B cell (primary cell): ENCODE measurements at regions of chr7 and their contacts with region 1.

Region 1: GRCh38 chr7:127708788-127709187 is 56.8 kb downstream of the SND1 start:
- DNase-seq: peak; percentile 82
- ATAC-seq: peak; percentile 66
- H3K4me3 ChIP-seq: no peak overlapping the region
- H3K4me3 Mint-ChIP-seq: no peak overlapping the region
- H3K27ac ChIP-seq: no peak overlapping the region
- H3K27ac Mint-ChIP-seq: no peak overlapping the region
- H3K4me1 ChIP-seq: no peaks in the 10 kb centered on the region
- H3K4me1 Mint-ChIP-seq: no peaks in the 10 kb centered on the region
- H3K27me3 ChIP-seq: no peaks in the 10 kb centered on the region
- H3K27me3 Mint-ChIP-seq: no peaks in the 10 kb centered on the region
- CTCF ChIP-seq: peak; percentile 89

Region 2: DNA sequence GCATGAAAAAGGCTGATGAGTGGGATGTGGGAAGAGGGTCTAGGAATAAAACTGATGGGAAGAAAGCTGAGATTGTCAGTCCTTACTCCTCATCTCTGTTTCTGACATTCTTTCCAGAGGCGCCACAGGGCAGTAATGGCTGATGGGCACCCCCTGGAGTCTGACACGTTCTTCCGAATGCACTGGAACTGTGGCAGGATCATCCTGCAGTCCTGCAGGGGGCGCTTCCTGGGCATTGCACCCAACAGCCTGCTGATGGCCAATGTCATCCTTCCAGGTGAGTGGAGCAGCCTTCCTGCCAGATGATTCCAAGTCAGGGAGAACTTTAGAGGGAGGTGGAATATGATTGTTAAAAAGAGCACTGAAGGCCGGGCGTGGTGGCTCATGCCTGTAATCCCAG is 110.5 kb before region 1 on chr7:
- CTCF ChIA-PET with region 1: no interaction called
- POLR2A ChIA-PET with region 1: no interaction called
- intact Hi-C with region 1: no loop called
- DNase-seq: no peak
- ATAC-seq: no peak
- H3K4me3 ChIP-seq: no peak overlapping the region
- H3K4me3 Mint-ChIP-seq: no peak overlapping the region
- H3K27ac ChIP-seq: no peak overlapping the region
- H3K27ac Mint-ChIP-seq: no peak overlapping the region
- H3K4me1 ChIP-seq: no peaks in the 10 kb centered on the region
- H3K4me1 Mint-ChIP-seq: no peaks in the 10 kb centered on the region
- H3K27me3 ChIP-seq: no peaks in the 10 kb centered on the region
- H3K27me3 Mint-ChIP-seq: peaks cover 6% of the 10 kb centered on the region
- CTCF ChIP-seq: no peak

Region 3: GRCh38 chr7:127692200-127692599 is 16.6 kb before region 1 on chr7:
- CTCF ChIA-PET with region 1: interaction called, 24 read pairs
- POLR2A ChIA-PET with region 1: no interaction called
- intact Hi-C with region 1: no loop called
- DNase-seq: no peak
- ATAC-seq: no peak
- H3K4me3 ChIP-seq: no peak overlapping the region
- H3K4me3 Mint-ChIP-seq: no peak overlapping the region
- H3K27ac ChIP-seq: no peak overlapping the region
- H3K27ac Mint-ChIP-seq: no peak overlapping the region
- H3K4me1 ChIP-seq: peaks cover 9 to 10% of the 10 kb centered on the region in 2 donors
- H3K4me1 Mint-ChIP-seq: peaks cover 16% of the 10 kb centered on the region
- H3K27me3 ChIP-seq: no peaks in the 10 kb centered on the region
- H3K27me3 Mint-ChIP-seq: no peaks in the 10 kb centered on the region
- CTCF ChIP-seq: no peak

Region 4: DNA sequence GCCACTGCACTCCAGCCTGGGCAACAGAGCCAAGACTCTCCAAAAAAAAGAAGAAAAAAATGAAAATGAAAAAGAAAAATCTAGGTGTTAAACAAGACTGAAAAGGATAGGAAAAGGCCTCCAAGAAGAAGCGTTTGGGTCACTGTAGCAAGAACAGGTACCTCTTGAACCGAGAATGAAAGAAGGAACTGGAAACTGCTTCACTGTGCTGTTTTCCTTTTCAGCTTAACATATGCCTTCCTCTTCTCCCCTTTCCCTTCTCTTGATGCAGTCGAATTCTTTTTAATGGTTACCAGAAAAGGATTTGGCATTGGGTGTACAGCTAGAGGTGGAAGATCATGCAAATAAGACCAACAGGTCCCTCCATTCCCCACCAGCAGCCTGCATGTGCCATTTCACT is 294.4 kb after region 1 on chr7:
- CTCF ChIA-PET with region 1: interaction called, 13 read pairs
- POLR2A ChIA-PET with region 1: no interaction called
- intact Hi-C with region 1: no loop called
- DNase-seq: peak; percentile 36
- ATAC-seq: peak; percentile 40
- H3K4me3 ChIP-seq: peak overlapping the region in 1 of 5 experiments; percentile 12
- H3K4me3 Mint-ChIP-seq: peak overlapping the region; percentile 65
- H3K27ac ChIP-seq: peak overlapping the region in 1 of 2 donors; percentile 28
- H3K27ac Mint-ChIP-seq: peak overlapping the region; percentile 86
- H3K4me1 ChIP-seq: peaks cover 38 to 47% of the 10 kb centered on the region in 2 donors
- H3K4me1 Mint-ChIP-seq: peaks cover 65% of the 10 kb centered on the region
- H3K27me3 ChIP-seq: no peaks in the 10 kb centered on the region
- H3K27me3 Mint-ChIP-seq: no peaks in the 10 kb centered on the region
- CTCF ChIP-seq: no peak

Region 5: DNA sequence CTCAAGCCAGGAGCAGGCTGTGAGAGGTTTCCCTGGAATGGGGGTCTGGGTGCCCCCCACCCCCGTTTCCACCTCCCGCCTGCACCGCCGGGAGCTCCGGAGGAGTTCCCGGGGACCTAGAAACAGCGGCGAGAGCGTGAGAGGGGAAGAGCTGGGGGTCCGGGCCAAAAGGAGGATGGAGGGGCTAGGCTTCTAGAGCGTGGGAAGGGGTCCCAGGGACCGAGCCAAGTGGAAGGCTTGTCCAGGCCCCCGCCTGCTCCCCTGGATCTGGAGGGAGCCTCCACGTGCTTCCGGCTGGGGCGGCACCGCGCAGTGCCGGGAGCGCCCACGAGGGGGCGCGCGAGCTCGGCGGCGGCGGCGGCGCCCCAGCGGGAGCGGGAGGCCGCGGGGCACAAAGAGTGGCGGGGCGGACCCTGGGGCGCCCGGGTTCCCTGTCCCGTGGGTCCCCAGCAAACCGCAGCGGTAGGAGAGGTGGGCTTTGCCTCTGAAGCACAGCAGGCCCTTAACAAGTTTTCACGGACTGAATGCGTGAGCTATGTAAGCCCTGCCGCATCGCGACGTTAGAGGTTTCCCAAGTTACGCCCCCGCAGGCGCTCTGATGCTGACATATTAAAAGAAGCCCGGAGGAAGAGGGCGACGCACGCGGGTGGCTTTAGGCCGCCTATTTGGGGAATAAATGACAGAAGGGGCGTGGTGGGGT is 426.9 kb after region 1 on chr7:
- CTCF ChIA-PET with region 1: interaction called, 75 read pairs
- POLR2A ChIA-PET with region 1: no interaction called
- intact Hi-C with region 1: loop called (anchors 1 kb)
- DNase-seq: peak; percentile 79
- ATAC-seq: peak; percentile 96
- H3K4me3 ChIP-seq: peak overlapping the region; percentile 21 to 70 (median 65)
- H3K4me3 Mint-ChIP-seq: peak overlapping the region; percentile 84
- H3K27ac ChIP-seq: no peak overlapping the region
- H3K27ac Mint-ChIP-seq: no peak overlapping the region
- H3K4me1 ChIP-seq: peaks cover 17 to 22% of the 10 kb centered on the region in 2 donors
- H3K4me1 Mint-ChIP-seq: peaks cover 16% of the 10 kb centered on the region
- H3K27me3 ChIP-seq: peaks cover 0 to 38% (median 17%) of the 10 kb centered on the region in 4 experiments
- H3K27me3 Mint-ChIP-seq: peaks cover 35% of the 10 kb centered on the region
- CTCF ChIP-seq: peak; percentile 96

Region 6: DNA sequence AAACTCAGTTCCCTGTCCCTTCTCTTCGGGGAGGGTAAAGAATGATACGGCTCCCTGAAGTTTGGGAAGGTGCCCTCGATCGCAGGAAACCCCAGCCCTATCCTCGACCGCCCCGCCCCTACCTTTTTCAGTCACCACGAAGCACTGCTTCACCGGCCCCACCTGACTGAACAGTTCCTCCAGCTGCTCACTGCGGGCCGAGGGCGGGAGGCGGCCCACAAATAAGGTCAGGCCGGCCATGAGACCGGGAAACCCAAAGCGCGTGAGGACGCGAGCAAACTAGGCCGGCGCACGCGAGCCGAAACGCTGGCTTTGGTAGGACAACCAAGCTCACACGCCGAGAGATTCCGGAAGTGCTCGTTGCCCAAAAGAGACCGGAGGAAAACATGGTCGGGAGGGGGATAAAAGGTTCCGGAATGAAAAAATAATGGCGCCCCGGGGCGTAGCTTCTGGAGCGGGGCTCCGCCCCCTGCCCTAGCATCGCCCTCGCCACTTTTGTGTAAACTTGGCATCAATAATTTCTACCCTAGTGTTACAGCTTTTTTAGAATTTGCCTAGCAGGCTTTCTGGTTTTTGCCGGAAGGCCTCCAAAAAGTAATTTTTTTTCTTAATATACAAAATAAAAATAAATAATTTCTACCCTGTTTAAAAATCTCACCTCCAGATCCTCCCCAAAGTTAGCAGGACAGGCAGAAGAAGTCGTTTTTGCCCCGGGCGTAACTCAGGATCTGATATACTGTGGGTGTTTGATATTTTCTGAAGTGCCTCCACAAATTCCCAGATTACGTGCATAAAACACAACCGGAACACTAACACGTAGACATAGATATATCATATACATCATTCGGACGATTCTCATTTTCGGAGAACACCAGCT is 635.0 kb after region 1 on chr7 and contains the start of gene RBM28:
- CTCF ChIA-PET with region 1: no interaction called
- POLR2A ChIA-PET with region 1: no interaction called
- intact Hi-C with region 1: no loop called
- DNase-seq: peak; percentile 95
- ATAC-seq: peak; percentile 95
- H3K4me3 ChIP-seq: peak within 1 kb of the TSS; percentile 75 to 91 (median 81)
- H3K4me3 Mint-ChIP-seq: peak within 1 kb of the TSS; percentile 98
- H3K27ac ChIP-seq: peak within 1 kb of the TSS; percentile 71 to 76
- H3K27ac Mint-ChIP-seq: peak within 1 kb of the TSS; percentile 96
- H3K4me1 ChIP-seq: peaks cover 15 to 19% of the 10 kb centered on the region in 2 donors
- H3K4me1 Mint-ChIP-seq: peaks cover 28% of the 10 kb centered on the region
- H3K27me3 ChIP-seq: peaks cover 0 to 11% (median 1%) of the 10 kb centered on the region in 4 experiments
- H3K27me3 Mint-ChIP-seq: peaks cover 14% of the 10 kb centered on the region
- CTCF ChIP-seq: no peak
- total RNA-seq, gene RBM28: 46.2 and 52.8 TPM in 2 replicates

Region 7: DNA sequence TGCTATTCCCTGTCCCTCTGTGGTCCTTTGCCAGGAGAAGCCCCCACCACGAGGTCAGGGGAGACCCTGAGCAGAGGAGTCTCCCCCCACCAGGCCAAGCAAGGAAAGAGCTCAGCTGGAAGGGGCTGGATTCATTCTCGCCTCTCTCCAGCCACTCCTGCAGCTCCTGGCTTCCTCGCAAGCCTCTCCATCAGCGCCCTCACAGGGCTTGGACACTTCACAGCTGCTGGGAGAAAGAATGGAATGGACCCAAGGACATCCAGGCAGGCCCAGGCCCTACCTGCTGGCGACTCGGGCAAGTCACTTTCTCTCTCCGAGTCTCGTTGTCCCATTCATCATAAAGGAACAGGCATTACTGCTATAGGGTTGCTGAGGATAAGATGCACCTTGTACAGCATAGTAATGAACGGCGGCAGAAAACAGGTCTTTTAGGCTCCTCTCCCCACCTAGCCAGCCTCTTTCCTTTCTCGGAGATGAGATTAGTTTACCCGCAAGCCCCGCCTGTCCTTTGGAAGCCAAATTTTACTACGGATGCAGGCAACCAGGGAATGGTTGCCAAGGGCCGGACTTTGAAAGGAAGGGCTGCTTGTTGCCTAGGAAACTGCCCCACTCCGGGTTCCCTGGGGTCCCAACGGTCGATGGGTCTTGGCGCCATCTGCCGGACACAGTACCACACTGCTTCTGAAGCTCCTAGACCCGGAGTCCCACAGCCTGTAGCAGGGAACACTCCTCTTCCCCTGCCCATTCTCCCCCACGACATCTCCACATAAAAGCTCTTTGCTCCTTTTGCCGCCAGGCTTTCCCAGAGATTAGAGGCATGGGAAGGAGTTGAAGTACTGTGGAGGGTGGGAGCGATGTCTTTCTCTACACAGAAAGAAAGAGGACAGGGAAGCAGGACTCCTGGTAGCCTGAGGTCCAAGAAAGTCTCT is 678.7 kb after region 1 on chr7:
- CTCF ChIA-PET with region 1: interaction called, 16 read pairs
- POLR2A ChIA-PET with region 1: interaction called, 3 read pairs
- intact Hi-C with region 1: no loop called
- DNase-seq: peak; percentile 71
- ATAC-seq: peak; percentile 89
- H3K4me3 ChIP-seq: no peak overlapping the region
- H3K4me3 Mint-ChIP-seq: no peak overlapping the region
- H3K27ac ChIP-seq: no peak overlapping the region
- H3K27ac Mint-ChIP-seq: no peak overlapping the region
- H3K4me1 ChIP-seq: peaks cover 0 to 7% of the 10 kb centered on the region in 2 donors
- H3K4me1 Mint-ChIP-seq: peaks cover 6% of the 10 kb centered on the region
- H3K27me3 ChIP-seq: peaks cover 0 to 11% (median 3%) of the 10 kb centered on the region in 4 experiments
- H3K27me3 Mint-ChIP-seq: no peaks in the 10 kb centered on the region
- CTCF ChIP-seq: peak; percentile 86